ENCODE measurements at regions of chrX and their contacts with region 1.

Region 1: DNA sequence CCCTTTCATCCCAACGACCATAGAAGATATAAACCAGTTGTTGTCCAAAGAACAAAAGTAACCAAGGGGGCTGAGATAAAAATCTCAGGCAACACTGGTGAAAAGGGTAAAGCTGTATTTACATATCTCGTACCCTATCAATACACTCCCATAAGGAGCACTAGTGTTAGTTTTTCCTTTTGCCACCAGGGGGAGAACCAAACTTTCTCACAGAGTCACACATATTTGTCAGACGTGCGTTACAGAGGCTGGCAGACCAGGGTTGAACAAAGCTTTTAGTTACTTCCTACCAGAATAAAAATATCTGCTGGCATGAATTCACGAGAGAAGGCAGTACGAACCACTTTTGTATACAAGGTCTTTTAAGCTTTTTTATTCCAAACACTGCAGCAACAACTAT is 88.3 kb downstream of the AMELX start:
- DNase-seq: peak; percentile 78
- H3K4me3 Mint-ChIP-seq: no peak overlapping the region
- H3K27ac Mint-ChIP-seq: no peak overlapping the region
- H3K4me1 Mint-ChIP-seq: peaks cover 10% of the 10 kb centered on the region
- H3K27me3 Mint-ChIP-seq: no peaks in the 10 kb centered on the region
- CTCF ChIP-seq: peak; percentile 46

Region 2: GRCh38 chrX:11143931-11144678 is 237.4 kb before region 1 on chrX:
- CTCF ChIA-PET with region 1: interaction called, 7 read pairs
- POLR2A ChIA-PET with region 1: no interaction called
- intact Hi-C with region 1: loop called (anchors 1 kb)
- DNase-seq: peak; percentile 88
- H3K4me3 Mint-ChIP-seq: no peak overlapping the region
- H3K27ac Mint-ChIP-seq: no peak overlapping the region
- H3K4me1 Mint-ChIP-seq: no peaks in the 10 kb centered on the region
- H3K27me3 Mint-ChIP-seq: peaks cover 53% of the 10 kb centered on the region
- CTCF ChIP-seq: peak; percentile 55

Region 3: DNA sequence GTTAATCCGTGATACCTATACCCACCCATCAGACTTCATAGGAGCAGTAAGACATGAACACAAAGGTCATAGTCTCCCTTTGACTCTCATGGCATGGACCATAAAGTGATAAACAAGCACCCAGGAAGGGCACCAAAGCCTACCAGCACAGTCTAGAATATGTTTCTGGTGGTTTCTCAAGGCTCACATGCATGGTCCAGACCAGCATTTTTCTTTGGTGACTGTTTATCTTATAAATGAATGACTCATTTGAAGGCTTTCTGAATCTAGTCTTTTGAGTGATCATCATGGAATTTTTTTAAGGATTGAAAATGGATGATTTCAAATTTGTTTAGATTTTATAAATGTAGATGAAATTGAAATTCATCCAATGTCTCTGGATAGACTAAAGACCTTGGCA is 120.2 kb before region 1 on chrX:
- CTCF ChIA-PET with region 1: no interaction called
- POLR2A ChIA-PET with region 1: no interaction called
- intact Hi-C with region 1: no loop called
- DNase-seq: peak; percentile 24
- H3K4me3 Mint-ChIP-seq: no peak overlapping the region
- H3K27ac Mint-ChIP-seq: no peak overlapping the region
- H3K4me1 Mint-ChIP-seq: no peaks in the 10 kb centered on the region
- H3K27me3 Mint-ChIP-seq: peaks cover 53% of the 10 kb centered on the region
- CTCF ChIP-seq: no peak

Region 4: GRCh38 chrX:11367609-11368430 is 13.6 kb before region 1 on chrX:
- CTCF ChIA-PET with region 1: interaction called, 22 read pairs
- POLR2A ChIA-PET with region 1: interaction called, 4 read pairs
- intact Hi-C with region 1: no loop called
- DNase-seq: no peak
- H3K4me3 Mint-ChIP-seq: no peak overlapping the region
- H3K27ac Mint-ChIP-seq: no peak overlapping the region
- H3K4me1 Mint-ChIP-seq: no peaks in the 10 kb centered on the region
- H3K27me3 Mint-ChIP-seq: peaks cover 14% of the 10 kb centered on the region
- CTCF ChIP-seq: no peak

Region 5: GRCh38 chrX:11423362-11423818 is 41.9 kb after region 1 on chrX:
- CTCF ChIA-PET with region 1: interaction called, 20 read pairs
- POLR2A ChIA-PET with region 1: no interaction called
- intact Hi-C with region 1: no loop called
- DNase-seq: peak; percentile 30
- H3K4me3 Mint-ChIP-seq: no peak overlapping the region
- H3K27ac Mint-ChIP-seq: no peak overlapping the region
- H3K4me1 Mint-ChIP-seq: peaks cover 4% of the 10 kb centered on the region
- H3K27me3 Mint-ChIP-seq: peaks cover 18% of the 10 kb centered on the region
- CTCF ChIP-seq: no peak

Region 6: GRCh38 chrX:11470250-11470974 is 88.9 kb after region 1 on chrX:
- CTCF ChIA-PET with region 1: interaction called, 12 read pairs
- POLR2A ChIA-PET with region 1: interaction called, 3 read pairs
- intact Hi-C with region 1: loop called (anchors 10 kb)
- DNase-seq: peak; percentile 90
- H3K4me3 Mint-ChIP-seq: no peak overlapping the region
- H3K27ac Mint-ChIP-seq: peak overlapping the region; percentile 78
- H3K4me1 Mint-ChIP-seq: peaks cover 5% of the 10 kb centered on the region
- H3K27me3 Mint-ChIP-seq: peaks cover 18% of the 10 kb centered on the region
- CTCF ChIP-seq: no peak

Region 7: DNA sequence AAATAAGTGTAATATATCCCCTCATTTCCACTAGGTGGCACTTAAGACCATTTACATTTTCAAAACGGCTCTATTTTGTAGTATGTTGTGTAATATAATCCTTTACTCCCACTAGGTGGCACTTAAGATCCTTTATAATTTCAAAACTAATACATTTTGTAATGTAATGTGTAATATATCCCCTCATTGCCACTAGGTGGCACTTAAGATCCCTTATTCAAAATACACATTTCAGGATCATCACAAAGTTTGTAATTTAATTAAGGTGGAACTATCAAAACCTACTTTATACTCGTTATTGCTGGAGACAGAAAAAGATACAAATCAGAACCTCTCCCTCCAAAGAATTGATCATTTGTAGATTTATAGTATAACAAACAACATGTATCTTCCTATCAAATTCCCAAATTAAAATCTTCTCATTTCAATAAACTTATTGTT is 151.8 kb after region 1 on chrX:
- CTCF ChIA-PET with region 1: interaction called, 89 read pairs
- POLR2A ChIA-PET with region 1: no interaction called
- intact Hi-C with region 1: loop called (anchors 1 kb)
- DNase-seq: peak; percentile 78
- H3K4me3 Mint-ChIP-seq: no peak overlapping the region
- H3K27ac Mint-ChIP-seq: no peak overlapping the region
- H3K4me1 Mint-ChIP-seq: no peaks in the 10 kb centered on the region
- H3K27me3 Mint-ChIP-seq: peaks cover 20% of the 10 kb centered on the region
- CTCF ChIP-seq: peak; percentile 82

Region 8: GRCh38 chrX:12115377-12115776 is 733.9 kb after region 1 on chrX:
- CTCF ChIA-PET with region 1: no interaction called
- POLR2A ChIA-PET with region 1: no interaction called
- intact Hi-C with region 1: no loop called
- DNase-seq: peak; percentile 35
- H3K4me3 Mint-ChIP-seq: no peak overlapping the region
- H3K27ac Mint-ChIP-seq: no peak overlapping the region
- H3K4me1 Mint-ChIP-seq: no peaks in the 10 kb centered on the region
- H3K27me3 Mint-ChIP-seq: peaks cover 16% of the 10 kb centered on the region
- CTCF ChIP-seq: peak; percentile 7

Measured in MCF 10A (cell line).